ENCODE measurements at regions of chr19 and their contacts with region 1.

Region 1: DNA sequence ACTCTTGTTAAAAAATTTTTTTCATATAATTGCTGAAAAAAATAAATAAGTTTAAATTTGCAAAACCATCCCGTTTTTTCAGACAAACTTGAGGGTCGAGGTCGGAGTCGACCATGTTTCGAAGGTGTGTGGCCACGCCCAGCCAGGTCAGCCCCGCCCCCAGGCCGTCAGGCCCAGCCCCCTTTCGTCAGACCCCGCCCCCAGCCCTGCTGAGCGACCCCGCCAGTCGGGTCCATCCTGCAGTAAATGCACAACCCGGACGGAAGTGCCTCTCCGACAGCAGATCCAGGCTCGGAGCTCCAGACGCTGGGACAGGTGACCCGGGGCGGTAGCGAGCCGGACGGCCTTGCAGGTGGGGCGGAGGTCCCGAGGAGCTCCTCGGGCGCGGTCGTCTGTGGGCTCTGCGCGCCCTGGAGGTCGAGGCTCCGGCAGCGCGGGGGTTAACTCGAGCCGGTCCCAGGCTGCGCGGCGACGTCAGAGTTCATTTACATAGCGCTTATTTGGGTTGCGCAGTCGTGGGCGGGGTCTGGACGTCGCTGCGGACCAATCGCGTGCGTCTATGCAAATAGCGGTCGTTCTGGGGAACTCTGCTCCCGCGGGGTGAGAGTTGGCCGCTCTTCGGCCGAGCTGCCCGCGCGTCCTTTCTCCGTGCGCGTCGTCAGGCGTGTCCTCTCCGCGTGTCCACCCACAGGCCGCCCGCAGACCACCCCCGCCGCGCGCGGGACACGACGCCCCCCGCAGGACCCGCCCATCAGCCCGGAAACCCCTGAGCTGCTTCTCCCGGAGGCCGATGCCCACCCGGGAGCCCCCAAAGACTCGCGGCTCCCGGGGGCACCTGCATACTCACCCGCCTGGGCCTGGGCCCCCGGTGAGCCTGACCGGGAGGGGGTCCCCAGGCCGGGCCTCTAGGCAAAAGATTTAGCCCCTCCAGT is at the start of gene OCEL1:
- DNase-seq: peak; percentile 98 to 99
- ATAC-seq: peak; percentile 97 to 98 (median 98)
- H3K4me3 ChIP-seq: peak within 1 kb of the TSS; percentile 22 to 88 (median 72)
- H3K27ac ChIP-seq: peak within 1 kb of the TSS; percentile 27 to 94 (median 88)
- H3K4me1 ChIP-seq: peaks cover 0 to 25% (median 15%) of the 10 kb centered on the region in 9 donors
- H3K27me3 ChIP-seq: no peaks in the 10 kb centered on the region
- CTCF ChIP-seq: no peak
- total RNA-seq, gene OCEL1: 7.2 to 38.6 (median 15.0) TPM

Region 2: DNA sequence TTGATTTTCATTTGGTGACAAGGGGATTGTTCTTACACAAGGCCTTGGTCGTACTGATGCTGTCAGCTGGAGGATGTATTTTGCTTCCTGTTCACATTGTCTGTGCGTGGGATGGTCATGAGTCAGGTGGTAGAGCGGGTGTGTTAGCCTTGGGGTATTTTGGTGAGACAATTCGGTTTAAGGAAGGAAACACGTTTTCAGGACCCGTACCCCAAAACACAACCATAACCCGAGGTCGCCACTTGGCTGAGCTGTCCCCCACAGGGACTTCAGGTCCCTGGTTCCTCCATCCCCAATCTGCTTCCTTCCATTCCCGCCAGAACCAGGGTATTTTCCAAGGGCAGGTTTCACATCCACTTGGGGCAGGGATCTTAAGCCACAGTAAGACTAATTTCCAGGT is 135.7 kb before region 1 on chr19:
- intact Hi-C with region 1: no loop called
- DNase-seq: no peak
- ATAC-seq: peak in 3 of 8 donors; percentile 11 to 39 (median 36)
- H3K4me3 ChIP-seq: no peak overlapping the region
- H3K27ac ChIP-seq: peak overlapping the region in 3 of 10 donors; percentile 6 to 88 (median 47)
- H3K4me1 ChIP-seq: peaks cover 5 to 67% (median 41%) of the 10 kb centered on the region in 9 donors
- H3K27me3 ChIP-seq: no peaks in the 10 kb centered on the region
- CTCF ChIP-seq: no peak

Region 3: DNA sequence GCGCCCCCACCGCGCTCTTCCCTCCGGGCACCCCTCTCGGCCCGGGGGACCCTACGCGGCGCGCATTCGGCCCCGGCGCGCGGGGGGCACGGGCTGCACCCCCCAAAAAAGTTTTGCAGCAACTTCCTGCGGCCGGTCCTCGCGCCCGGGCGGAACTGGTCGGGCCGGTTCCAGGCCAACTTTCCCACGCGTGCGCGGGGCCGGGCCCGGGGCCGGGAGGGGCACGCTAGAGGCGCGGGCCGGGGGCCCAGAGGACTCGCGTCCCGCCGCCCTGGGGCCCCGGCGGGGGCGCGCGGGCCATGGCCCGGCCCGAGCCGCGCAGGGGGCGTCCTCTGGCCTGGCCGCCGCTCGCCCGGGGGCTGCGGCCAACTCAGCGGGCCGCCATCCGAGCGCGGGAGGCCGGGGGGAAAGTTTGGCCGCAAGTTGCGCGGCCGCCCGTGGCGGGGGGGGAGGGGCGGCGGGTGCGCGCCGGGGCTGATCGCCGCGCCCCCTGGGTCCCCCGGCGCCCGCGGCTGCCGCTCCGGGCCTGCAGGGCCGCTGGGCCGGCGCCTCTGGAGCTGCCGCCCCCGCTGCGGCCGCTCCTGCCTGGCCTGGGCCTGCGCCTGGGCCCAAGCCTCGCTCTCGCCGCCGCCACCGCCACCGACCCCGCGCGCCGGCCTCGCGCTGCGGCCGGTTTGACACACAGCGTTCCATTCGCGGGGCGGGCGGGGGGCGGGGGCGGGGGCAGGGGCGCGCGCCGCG is 19.1 kb after region 1 on chr19 and contains the start of gene NR2F6:
- intact Hi-C with region 1: loop called in 1 of 10 experiments (anchors 2 kb)
- DNase-seq: peak in 1 of 2 donors; percentile 62
- ATAC-seq: peak in 1 of 8 donors; percentile 2
- H3K4me3 ChIP-seq: peak within 1 kb of the TSS; percentile 61 to 93 (median 87)
- H3K27ac ChIP-seq: peak within 1 kb of the TSS; percentile 78 to 94 (median 87)
- H3K4me1 ChIP-seq: peaks cover 10 to 56% (median 36%) of the 10 kb centered on the region in 9 donors
- H3K27me3 ChIP-seq: no peaks in the 10 kb centered on the region
- CTCF ChIP-seq: no peak
- total RNA-seq, gene NR2F6: 34.5 to 79.7 (median 42.2) TPM

Region 4: DNA sequence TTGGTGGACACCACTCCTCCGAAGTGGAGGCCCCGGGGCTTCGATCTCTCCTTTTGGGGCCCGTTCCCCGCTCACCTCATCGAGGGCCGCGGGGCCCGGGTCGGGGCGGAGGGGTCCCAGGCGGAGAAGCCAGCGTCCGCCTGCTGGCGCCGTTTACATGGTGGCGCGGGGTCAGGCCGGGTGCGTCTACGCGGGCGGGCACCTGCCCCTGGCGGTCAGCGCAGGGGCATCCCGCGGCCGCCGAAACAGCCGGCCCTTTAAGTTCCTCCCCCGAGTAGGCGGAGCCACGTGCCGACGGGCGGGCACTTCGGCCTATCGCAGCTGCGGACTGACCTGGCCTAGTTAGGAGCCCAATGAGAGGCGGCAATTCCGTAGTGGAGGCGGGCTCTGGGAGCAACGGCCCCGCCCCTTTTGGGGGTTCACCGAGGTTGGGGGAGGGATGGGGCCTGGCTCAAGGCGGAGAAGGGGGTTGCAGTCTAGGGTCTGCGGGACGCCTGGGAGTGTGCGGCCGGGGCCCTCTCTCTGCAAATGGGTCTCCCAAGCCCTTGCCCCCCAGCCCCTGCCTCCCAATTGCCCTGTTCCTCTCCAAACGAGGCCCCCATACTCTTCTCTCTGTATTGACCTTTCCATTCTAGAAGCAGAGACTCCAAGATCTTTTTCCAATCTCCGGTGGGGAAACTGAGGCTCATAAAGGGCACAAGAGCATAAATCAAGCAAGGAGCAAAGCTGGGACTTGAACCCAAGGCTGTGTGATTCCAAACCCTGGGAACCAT is 77.1 kb after region 1 on chr19 and contains the start of gene ABHD8:
- intact Hi-C with region 1: no loop called
- DNase-seq: peak; percentile 96 to 98
- ATAC-seq: peak; percentile 81 to 90 (median 86)
- H3K4me3 ChIP-seq: peak within 1 kb of the TSS; percentile 34 to 94 (median 76)
- H3K27ac ChIP-seq: peak within 1 kb of the TSS in 9 of 10 donors; percentile 46 to 98 (median 92)
- H3K4me1 ChIP-seq: peaks cover 7 to 49% (median 45%) of the 10 kb centered on the region in 9 donors
- H3K27me3 ChIP-seq: no peaks in the 10 kb centered on the region
- CTCF ChIP-seq: peak; percentile 59 to 84 (median 66)
- total RNA-seq, gene ABHD8: 6.0 to 16.9 (median 7.9) TPM

Region 5: DNA sequence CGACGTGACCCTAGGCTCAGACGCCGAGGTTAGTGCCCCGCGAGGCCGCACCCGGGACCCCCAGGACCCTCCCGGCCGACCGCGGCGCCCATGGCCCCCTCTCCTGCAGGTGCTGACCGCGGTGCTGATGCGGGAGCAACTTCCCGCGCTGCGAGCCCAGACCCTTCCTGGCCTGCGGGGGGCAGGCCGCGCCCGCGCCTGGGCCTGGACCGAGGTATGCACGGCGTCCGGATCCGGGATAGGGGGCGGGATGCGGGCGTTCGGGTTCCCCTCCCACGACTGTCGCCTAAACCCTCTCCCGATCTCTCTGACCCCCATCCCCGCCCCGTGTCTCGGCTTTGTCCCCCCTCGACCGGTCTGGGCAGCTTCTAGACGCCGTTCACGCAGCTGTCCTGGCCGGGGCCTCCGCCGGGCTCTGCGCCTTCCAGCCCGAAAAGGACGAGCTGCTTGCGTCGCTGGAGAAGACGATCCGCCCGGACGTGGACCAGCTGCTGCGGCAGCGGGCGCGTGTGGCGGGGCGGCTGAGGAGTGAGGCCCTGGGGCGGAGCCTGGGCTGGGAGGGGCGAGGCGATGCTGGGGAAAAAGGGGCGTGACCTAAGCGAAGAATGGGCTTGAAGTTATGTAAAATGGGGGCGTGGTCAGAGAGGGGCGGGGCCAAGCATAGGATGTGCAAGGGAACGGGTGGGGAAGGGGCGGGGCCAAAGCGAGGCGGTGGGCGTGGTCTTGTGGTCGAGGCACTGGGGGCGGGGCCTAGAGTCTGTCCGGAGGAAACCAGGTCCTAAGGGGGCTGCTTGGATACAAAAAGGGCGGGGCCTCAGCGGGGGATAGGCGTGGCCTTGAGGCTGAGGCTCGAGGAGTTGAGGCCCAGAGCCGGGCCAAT is 313.2 kb after region 1 on chr19:
- intact Hi-C with region 1: no loop called
- DNase-seq: peak; percentile 95 to 96
- ATAC-seq: peak; percentile 90 to 95 (median 92)
- H3K4me3 ChIP-seq: peak overlapping the region; percentile 25 to 65 (median 57)
- H3K27ac ChIP-seq: peak overlapping the region in 8 of 10 donors; percentile 22 to 69 (median 62)
- H3K4me1 ChIP-seq: peaks cover 7 to 14% (median 10%) of the 10 kb centered on the region in 9 donors
- H3K27me3 ChIP-seq: peaks cover 0 to 10% (median 0%) of the 10 kb centered on the region in 7 donors
- CTCF ChIP-seq: peak in 7 of 9 donors; percentile 35 to 75 (median 60)

Measured in heart right ventricle (tissue), 16 donors.